ENCODE measurements at regions of chr22 and their contacts with region 1.

Region 1: DNA sequence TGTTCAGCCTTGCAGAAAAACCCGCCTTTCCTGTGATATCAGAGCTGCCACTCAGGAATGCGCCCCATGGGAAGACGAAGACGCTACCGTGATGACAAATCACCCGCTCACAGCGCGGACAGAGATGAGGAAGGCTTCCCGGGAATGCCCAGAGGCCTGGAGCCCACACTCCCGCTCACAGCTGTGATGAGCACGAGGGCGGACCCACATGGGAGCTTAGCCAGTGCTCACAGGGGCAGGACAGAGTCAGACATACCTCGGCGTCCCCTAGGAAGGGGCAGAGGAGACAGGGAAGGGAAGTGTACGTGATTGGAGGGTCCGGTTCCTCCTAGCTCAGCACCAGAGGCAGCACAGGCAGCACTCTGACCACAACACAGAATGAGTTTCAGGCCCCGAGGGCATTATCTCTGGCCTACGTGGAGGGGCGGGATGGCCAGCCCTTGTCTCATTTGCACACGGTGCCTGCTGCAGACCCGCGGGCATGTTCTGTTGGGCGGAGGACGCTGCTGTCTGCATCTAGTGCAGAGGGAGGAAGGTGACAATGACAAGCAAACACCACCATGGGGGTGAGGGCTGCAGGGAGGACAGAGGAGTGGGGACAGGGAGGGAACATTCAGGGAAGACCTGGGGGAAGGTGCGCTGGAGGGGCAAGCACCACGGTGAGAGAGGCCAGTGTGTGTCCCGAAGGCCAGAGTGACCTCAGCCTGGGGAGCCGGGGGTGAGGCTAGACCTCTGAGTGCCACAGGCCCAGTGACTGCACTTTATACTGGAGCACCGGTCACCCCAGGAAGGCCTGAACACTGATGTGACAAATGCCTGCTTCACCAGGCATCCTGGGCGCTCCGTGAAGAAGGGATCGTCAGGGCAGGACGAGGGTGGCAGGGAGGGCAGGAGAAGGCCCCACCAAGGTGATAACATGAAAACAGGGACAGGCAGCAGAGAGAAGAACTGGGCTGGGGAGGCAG is 79.6 kb downstream of the CELSR1 start:
- DNase-seq: peak in 1 of 5 donors; percentile 49
- ATAC-seq: no peak
- H3K4me3 ChIP-seq: no peak overlapping the region
- H3K27ac ChIP-seq: no peak overlapping the region
- H3K4me1 ChIP-seq: peaks cover 0 to 9% (median 2%) of the 10 kb centered on the region in 12 donors
- H3K27me3 ChIP-seq: peaks cover 0 to 4% (median 0%) of the 10 kb centered on the region in 9 donors
- CTCF ChIP-seq: no peak
- POLR2A ChIP-seq: no peak

Region 2: GRCh38 chr22:46483353-46483752 is 25.5 kb after region 1 on chr22:
- intact Hi-C with region 1: loop called in 1 of 10 experiments (anchors 2 kb)
- DNase-seq: no peak
- ATAC-seq: no peak
- H3K4me3 ChIP-seq: no peak overlapping the region
- H3K27ac ChIP-seq: no peak overlapping the region
- H3K4me1 ChIP-seq: peaks cover 0 to 14% (median 0%) of the 10 kb centered on the region in 12 donors
- H3K27me3 ChIP-seq: no peaks in the 10 kb centered on the region
- CTCF ChIP-seq: no peak
- POLR2A ChIP-seq: no peak